A549 (cell line): ENCODE measurements at regions of chr4 and their contacts with region 1.

Region 1: DNA sequence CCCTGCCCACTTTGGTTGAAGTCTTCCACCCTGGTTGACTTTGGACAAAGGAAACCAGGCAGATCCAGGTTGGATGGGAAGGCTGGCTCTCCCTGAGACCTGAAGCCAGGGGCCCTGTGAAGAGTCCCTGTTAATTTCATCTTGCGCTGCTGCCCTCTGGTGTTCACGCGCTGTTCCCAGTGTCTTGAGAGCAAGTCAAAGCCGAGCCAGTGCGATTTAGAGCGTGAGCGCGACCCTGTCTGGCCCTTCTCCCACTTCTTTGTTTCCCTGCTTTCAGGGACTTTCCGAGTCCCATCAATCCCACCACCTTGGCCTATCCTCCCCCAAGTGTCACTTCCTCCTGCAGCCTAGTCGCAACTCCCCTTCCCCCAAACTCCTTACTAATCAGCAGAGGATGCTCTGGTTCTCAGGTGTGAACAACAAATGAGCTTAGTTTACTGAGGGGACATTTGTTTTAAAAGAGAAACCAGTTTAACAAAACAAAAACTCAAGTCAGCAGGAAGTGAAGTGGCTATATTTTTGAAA is 25.8 kb upstream of the CHRNA9 start:
- DNase-seq: peak; percentile 66 to 87
- ATAC-seq: peak; percentile 98 to 99
- H3K4me3 ChIP-seq: no peak overlapping the region
- H3K27ac ChIP-seq: peak overlapping the region; percentile 72 to 82
- H3K4me1 ChIP-seq: peaks cover 22% of the 10 kb centered on the region; the same call in 2 of the 3 replicates
- CTCF ChIP-seq: peak; percentile 69
- EP300 ChIP-seq: no peak
- POLR2A ChIP-seq: no peak
- RAD21 ChIP-seq: peak; percentile 84 to 87

Region 2: DNA sequence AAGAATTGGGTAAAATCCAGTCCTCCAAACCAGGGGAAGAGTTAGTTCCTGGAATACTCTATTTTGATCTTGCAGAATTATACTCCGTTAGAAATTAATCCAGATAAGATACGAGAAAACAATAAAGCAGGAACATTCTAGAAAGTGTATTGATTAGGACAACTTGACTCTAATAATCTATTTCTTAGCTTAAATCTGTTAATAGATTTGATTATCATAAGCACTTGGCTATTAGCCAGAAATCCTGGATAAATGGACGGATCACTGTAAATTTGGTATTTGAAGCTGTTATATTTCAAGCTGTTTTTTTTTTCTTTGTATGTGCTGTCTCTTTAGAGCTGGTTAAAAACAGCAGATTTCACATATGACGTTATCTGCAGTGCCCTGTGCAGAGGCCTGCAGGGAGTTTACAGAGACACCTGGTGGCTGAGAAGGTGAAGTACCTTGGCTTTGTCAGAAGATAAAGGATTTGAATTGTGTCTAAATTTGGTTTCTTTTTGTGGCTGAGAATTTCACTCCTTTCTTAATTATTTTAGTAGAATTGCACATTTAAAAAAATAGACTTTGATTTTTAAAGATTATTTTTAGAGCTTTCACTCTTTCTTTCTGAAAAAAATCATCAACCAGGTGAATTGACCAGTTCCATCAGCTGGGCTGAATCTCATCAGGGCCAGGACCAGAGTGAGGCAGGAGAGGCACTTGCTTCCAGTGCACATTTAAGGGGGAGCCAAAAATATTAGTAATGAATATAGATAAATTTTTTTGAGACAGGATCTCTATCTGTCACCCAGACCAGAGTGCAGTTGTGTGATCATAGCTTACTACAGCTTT is 16.1 kb after region 1 on chr4:
- CTCF ChIA-PET with region 1: interaction called, 17 read pairs
- POLR2A ChIA-PET with region 1: no interaction called
- DNase-seq: peak; percentile 59 to 73
- ATAC-seq: peak; percentile 85 to 90
- H3K4me3 ChIP-seq: no peak overlapping the region
- H3K27ac ChIP-seq: peak overlapping the region; percentile 4 to 75; a peak in 5 of 6 replicates
- H3K4me1 ChIP-seq: peaks cover 42% of the 10 kb centered on the region
- CTCF ChIP-seq: peak; percentile 68
- EP300 ChIP-seq: no peak
- POLR2A ChIP-seq: no peak
- RAD21 ChIP-seq: peak; percentile 74 to 77

Region 3: GRCh38 chr4:40536032-40536431 is 226.7 kb after region 1 on chr4:
- CTCF ChIA-PET with region 1: no interaction called
- POLR2A ChIA-PET with region 1: no interaction called
- DNase-seq: no peak
- ATAC-seq: no peak
- H3K4me3 ChIP-seq: no peak overlapping the region
- H3K27ac ChIP-seq: no peak overlapping the region
- H3K4me1 ChIP-seq: peaks cover 13% of the 10 kb centered on the region
- CTCF ChIP-seq: no peak
- EP300 ChIP-seq: no peak
- POLR2A ChIP-seq: no peak
- RAD21 ChIP-seq: no peak